SK-N-SH (cell line): ENCODE measurements at regions of chr5 and their contacts with region 1.

Region 1: GRCh38 chr5:173293817-173294672 is 34.2 kb downstream of the STC2 start:
- DNase-seq: peak; percentile 76
- H3K4me3 ChIP-seq: peak overlapping the region; percentile 18 to 42; a peak in 3 of 4 replicates
- H3K27ac ChIP-seq: no peak overlapping the region
- H3K4me1 ChIP-seq: peaks cover 0 to 32% of the 10 kb centered on the region in 2 experiments; a peak in 3 of 4 replicates
- H3K27me3 ChIP-seq: no peaks in the 10 kb centered on the region
- CTCF ChIP-seq: peak; percentile 93
- EP300 ChIP-seq: no peak
- RAD21 ChIP-seq: peak; percentile 98

Region 2: DNA sequence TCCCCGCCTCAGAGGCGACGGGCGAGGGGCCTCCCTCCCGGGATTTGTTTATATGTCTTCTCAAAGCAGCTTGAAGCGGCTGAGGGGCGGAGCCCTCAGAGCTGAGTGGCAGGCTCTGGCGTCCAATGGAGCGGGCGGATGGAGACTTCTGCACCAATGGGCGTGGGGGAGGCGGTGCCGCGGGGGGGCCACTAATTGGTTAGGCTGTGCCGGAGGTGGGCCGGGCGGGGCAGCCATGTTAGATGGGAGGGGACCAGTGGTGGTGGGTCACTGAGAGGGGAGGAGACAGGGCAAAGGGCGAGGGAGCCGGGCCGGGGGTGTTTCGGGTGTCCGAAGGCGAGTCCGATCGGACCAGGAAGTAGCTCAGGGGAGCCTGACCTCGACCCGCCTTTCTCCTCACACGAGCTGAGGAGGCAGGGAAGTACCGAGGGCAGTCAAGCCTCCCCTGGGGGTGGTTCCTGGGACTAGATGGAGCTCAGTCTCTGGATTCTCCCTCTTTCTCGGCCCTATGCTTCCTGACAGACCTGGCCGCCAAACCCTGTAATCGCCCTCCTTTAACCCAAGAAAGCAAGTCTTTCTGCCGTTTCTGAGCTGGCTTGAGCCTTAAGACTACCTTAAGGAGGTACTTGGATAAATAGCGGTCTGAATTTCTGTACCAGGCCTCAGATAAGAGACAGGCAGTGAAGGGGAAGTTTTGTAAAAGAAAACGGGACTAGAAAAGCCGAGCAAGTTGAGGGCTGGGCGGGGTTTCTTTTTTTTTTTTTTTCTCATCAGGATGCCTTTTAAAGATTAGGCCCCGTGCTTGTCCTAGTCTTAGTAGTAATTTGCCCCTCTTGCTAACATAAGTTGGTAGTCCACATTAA is 236.8 kb before region 1 on chr5:
- CTCF ChIA-PET with region 1: no interaction called
- POLR2A ChIA-PET with region 1: no interaction called
- DNase-seq: peak; percentile 97
- H3K4me3 ChIP-seq: peak overlapping the region; percentile 95
- H3K27ac ChIP-seq: peak overlapping the region; percentile 91 to 98
- H3K4me1 ChIP-seq: peaks cover 4 to 5% of the 10 kb centered on the region in 2 experiments; a peak in 3 of 4 replicates
- H3K27me3 ChIP-seq: no peaks in the 10 kb centered on the region
- CTCF ChIP-seq: no peak; the same call in 1 of the 2 replicates
- EP300 ChIP-seq: no peak
- RAD21 ChIP-seq: no peak

Region 3: GRCh38 chr5:173228639-173229381 is 65.2 kb before region 1 on chr5:
- CTCF ChIA-PET with region 1: interaction called, 10 read pairs
- POLR2A ChIA-PET with region 1: no interaction called
- DNase-seq: no peak
- H3K4me3 ChIP-seq: peak overlapping the region; percentile 9 to 12; a peak in 2 of 4 replicates
- H3K27ac ChIP-seq: no peak overlapping the region
- H3K4me1 ChIP-seq: peaks cover 0 to 3% of the 10 kb centered on the region in 2 experiments; a peak in 1 of 4 replicates
- H3K27me3 ChIP-seq: peaks cover 100% of the 10 kb centered on the region
- CTCF ChIP-seq: no peak
- EP300 ChIP-seq: no peak
- RAD21 ChIP-seq: no peak

Region 4: DNA sequence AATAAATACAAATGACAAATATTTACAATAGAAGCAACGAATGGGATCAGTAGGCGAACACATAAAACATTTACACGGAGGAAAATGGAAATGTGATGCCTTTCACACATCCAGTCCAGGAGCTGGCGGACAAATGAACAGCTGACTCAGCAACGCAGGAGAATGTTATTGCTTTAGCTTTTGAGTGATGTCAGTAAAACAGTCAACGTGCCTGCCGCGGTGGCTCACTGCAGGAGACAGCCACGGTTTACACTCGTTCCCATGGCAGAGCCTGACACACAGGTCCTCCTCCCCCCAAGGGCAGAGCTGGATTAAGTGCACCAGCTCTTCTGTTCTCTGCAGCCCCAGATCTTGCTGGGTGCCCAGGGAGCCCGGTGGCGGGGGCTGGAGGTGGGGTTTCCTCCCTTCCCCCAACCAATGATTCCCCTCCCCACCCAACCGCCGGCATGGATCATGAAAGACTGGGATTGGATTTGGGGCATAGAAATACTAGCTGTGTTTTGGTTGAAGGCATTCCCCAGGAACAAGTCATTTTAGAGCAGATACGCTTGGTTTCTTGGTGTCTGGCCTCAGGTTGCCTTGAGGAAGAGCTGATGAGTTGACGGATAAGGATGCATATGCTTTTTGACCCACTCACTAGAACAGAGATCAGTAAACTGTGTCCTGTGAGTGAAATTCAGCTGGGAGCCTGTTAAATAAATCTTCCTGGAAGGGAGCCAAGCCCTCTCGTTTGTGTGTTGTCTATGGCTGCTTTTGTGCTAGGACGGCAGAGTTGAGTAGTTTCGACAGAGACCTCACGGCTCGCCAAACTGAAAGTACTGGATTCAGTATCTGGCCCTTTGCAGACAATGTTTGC is 21.7 kb after region 1 on chr5:
- CTCF ChIA-PET with region 1: interaction called, 84 read pairs
- POLR2A ChIA-PET with region 1: interaction called, 6 read pairs
- DNase-seq: peak; percentile 83
- H3K4me3 ChIP-seq: no peak overlapping the region; a peak in 1 of 4 replicates
- H3K27ac ChIP-seq: peak overlapping the region; percentile 10 to 80; a peak in 2 of 4 replicates
- H3K4me1 ChIP-seq: peaks cover 13 to 29% of the 10 kb centered on the region in 2 experiments; a peak in 3 of 4 replicates
- H3K27me3 ChIP-seq: no peaks in the 10 kb centered on the region
- CTCF ChIP-seq: no peak
- EP300 ChIP-seq: peak in 1 of 2 experiments; percentile 3; a peak in 1 of 4 replicates
- RAD21 ChIP-seq: no peak

Region 5: DNA sequence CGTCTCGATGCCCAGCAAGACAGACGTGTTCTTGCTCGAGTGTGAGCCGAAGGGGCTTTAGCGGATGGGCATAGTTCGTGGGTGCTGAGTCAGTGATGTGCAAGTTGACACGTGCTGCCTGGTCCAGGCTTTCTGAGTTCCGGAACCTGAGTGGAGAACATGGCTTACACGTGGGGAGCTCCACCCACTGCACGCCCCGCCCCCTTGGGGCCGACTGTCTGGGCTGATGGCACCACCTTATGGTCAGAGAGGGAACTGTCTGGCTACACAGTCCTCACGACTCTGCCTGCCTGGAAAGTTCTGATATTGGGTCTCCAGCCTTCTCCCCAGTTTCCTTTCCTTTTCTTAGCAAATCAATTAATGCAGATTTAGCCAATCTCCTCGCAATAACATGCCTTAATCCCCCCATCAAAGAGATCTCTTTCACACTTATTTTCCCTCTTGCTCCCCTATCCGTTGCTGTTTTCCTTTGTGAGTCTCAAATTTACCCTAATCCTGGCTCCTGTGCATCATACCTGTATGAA is 38.0 kb after region 1 on chr5:
- CTCF ChIA-PET with region 1: interaction called, 503 read pairs
- POLR2A ChIA-PET with region 1: interaction called, 15 read pairs
- DNase-seq: peak; percentile 91
- H3K4me3 ChIP-seq: peak overlapping the region in 1 of 2 experiments; percentile 30; a peak in 1 of 4 replicates
- H3K27ac ChIP-seq: no peak overlapping the region; a peak in 1 of 4 replicates
- H3K4me1 ChIP-seq: peaks cover 0 to 20% of the 10 kb centered on the region in 2 experiments; a peak in 1 of 4 replicates
- H3K27me3 ChIP-seq: no peaks in the 10 kb centered on the region
- CTCF ChIP-seq: peak; percentile 91
- EP300 ChIP-seq: no peak
- RAD21 ChIP-seq: peak; percentile 99